Gastrocnemius medialis (tissue), 4 donors: ENCODE measurements at regions of chr20 and their contacts with region 1.

Region 1: DNA sequence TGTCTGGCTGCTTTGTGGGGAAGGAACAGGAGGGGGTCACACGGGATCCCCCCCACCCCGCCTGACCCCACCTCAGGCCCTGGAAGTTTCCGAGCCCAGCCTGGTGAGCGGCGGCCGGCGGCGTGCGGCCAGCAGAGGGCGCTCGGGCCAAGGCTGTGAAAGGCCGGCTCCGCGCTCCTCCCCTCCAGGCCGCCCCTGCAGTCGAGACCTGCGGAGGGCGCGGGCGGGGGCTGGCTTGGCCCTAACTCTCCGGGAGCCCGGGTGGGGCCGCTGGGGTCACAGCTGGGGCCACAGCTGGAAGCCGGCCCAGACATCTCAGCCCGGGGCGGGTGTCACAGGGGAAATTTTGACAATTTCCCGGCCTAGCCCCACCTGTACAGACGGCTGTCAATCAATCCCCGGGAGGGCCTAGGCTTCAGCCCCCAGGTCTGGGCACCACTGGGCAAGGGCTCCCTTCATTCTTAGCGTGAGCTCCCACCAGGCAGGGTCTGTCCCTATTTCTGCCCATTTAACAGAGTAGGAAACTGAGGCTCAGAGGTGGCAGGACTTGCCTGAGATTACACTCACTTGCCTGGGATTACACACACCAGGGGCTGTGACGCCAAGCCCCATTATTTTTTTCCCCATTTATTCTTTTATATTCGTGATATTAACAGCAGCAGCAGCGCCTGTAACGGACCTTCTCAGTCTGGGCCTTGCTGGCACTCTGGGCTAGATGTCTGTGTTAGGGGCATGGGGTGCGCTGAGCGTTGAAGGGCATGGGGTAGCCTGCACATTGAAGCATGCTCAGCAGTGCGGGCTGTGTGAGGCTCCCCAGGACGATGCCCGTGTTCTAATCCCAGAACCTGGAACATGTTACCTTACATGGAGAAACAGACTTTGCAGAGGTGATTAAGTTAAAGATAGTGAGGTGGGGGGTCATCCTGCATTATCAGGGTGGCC is 23.0 kb downstream of the ZBP1 start:
- DNase-seq: peak; percentile 32 to 35
- ATAC-seq: peak; percentile 49 to 68
- H3K4me3 ChIP-seq: peak overlapping the region in 1 of 4 donors; percentile 25
- H3K27ac ChIP-seq: no peak overlapping the region
- H3K4me1 ChIP-seq: peaks cover 0 to 6% of the 10 kb centered on the region in 2 donors
- H3K27me3 ChIP-seq: no peaks in the 10 kb centered on the region
- CTCF ChIP-seq: peak; percentile 75 to 94 (median 89)
- POLR2A ChIP-seq: no peak

Region 2: DNA sequence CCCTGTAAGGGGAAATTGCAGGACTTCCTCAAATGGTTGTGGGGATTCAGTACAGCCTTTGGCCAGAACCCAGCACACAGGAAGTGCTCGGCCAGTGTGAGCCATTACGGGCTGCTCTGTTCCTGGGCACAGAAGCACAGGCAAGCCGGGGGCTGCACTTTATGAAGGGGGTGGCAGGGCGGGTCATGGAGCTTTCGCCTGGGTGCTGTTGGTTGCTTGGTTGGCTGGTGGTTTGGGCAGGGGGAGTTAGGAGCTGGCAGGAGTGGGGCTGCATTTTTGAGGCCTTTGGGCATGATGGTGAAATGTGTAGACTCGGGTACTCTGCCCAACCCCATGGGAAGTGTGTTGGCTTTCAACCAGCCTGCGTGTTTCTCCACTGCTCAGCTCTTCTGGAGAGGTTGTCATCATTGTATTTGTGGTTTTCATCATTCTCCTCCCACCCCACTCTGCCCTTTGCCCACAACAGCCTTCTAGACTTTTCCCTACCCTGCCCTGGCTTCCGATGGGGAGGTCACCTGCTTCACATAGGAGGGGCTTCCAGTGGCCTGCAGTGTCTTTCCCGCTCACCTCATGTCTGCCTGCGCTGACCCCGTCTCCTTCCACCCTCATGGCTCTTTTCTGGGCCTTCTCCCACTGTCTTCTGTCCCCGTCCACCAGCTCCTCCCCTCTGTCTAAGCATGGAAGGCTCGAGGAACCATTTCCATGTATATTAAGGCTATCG is 222.2 kb before region 1 on chr20:
- in situ Hi-C with region 1: loop called in 1 of 4 experiments (anchors 10 kb)
- intact Hi-C with region 1: loop called (anchors 10 kb)
- DNase-seq: no peak
- ATAC-seq: peak; percentile 23 to 27
- H3K4me3 ChIP-seq: no peak overlapping the region
- H3K27ac ChIP-seq: peak overlapping the region in 1 of 4 donors; percentile 25
- H3K4me1 ChIP-seq: no peaks in the 10 kb centered on the region
- H3K27me3 ChIP-seq: no peaks in the 10 kb centered on the region
- CTCF ChIP-seq: no peak
- POLR2A ChIP-seq: no peak

Region 3: GRCh38 chr20:57480444-57481160 is 116.7 kb before region 1 on chr20:
- in situ Hi-C with region 1: no loop called
- intact Hi-C with region 1: no loop called
- DNase-seq: no peak
- ATAC-seq: no peak
- H3K4me3 ChIP-seq: no peak overlapping the region
- H3K27ac ChIP-seq: no peak overlapping the region
- H3K4me1 ChIP-seq: peaks cover 10 to 13% of the 10 kb centered on the region in 2 donors
- H3K27me3 ChIP-seq: peaks cover 0 to 2% (median 0%) of the 10 kb centered on the region in 3 donors
- CTCF ChIP-seq: no peak
- POLR2A ChIP-seq: no peak

Region 4: DNA sequence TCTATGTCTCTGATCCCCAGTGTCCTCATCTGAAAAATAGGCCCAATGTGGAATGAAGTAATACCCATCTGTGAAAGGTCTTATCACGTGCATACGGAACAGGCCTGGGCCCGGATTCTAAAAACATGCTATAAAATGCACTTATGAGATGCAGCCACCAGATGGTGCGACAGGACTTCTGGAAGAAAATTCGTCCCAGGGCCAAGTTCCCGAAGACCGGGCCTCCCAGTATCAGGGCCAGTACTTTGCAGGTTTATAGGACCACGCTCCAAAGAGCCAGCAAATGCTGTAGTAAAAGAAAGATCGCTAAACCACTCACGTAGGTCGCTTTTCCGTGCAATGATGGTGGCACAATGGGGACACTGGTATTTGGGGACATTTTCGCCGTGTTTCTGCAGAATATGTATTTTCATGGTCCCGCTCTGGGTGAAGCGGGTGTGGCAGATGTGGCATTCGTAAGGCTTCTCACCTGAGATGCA is 83.0 kb before region 1 on chr20:
- in situ Hi-C with region 1: loop called (anchors 5 kb)
- intact Hi-C with region 1: loop called (anchors 1 kb)
- DNase-seq: peak; percentile 49 to 53
- ATAC-seq: peak; percentile 62 to 81
- H3K4me3 ChIP-seq: no peak overlapping the region
- H3K27ac ChIP-seq: no peak overlapping the region
- H3K4me1 ChIP-seq: peaks cover 0 to 5% of the 10 kb centered on the region in 2 donors
- H3K27me3 ChIP-seq: no peaks in the 10 kb centered on the region
- CTCF ChIP-seq: peak; percentile 63 to 82 (median 75)
- POLR2A ChIP-seq: no peak

Region 5: GRCh38 chr20:57709931-57710799 is 112.9 kb after region 1 on chr20 and contains the start of gene PMEPA1:
- in situ Hi-C with region 1: no loop called
- intact Hi-C with region 1: no loop called
- DNase-seq: peak; percentile 92 to 94
- ATAC-seq: peak; percentile 74 to 78
- H3K4me3 ChIP-seq: peak within 1 kb of the TSS; percentile 62 to 84 (median 73)
- H3K27ac ChIP-seq: peak within 1 kb of the TSS; percentile 83 to 94 (median 91)
- H3K4me1 ChIP-seq: peaks cover 53% of the 10 kb centered on the region in 2 donors
- H3K27me3 ChIP-seq: no peaks in the 10 kb centered on the region
- CTCF ChIP-seq: peak in 2 of 5 experiments; percentile 7 to 36
- POLR2A ChIP-seq: peak; percentile 85 to 94
- total RNA-seq, gene PMEPA1: 1.5 to 8.1 (median 5.8) TPM

Region 6: GRCh38 chr20:58209652-58210397 is 612.6 kb after region 1 on chr20:
- in situ Hi-C with region 1: loop called (anchors 5 to 10 kb)
- intact Hi-C with region 1: loop called (anchors 1 kb)
- DNase-seq: peak; percentile 46 to 58
- ATAC-seq: peak; percentile 47 to 80
- H3K4me3 ChIP-seq: no peak overlapping the region
- H3K27ac ChIP-seq: no peak overlapping the region
- H3K4me1 ChIP-seq: no peaks in the 10 kb centered on the region
- H3K27me3 ChIP-seq: peaks cover 0 to 7% (median 3%) of the 10 kb centered on the region in 3 donors
- CTCF ChIP-seq: peak; percentile 99 to 100 (median 100)
- POLR2A ChIP-seq: no peak

Region 7: GRCh38 chr20:58219301-58219700 is 622.0 kb after region 1 on chr20:
- in situ Hi-C with region 1: loop called in 3 of 4 experiments (anchors 5 to 10 kb)
- intact Hi-C with region 1: no loop called
- DNase-seq: no peak
- ATAC-seq: no peak
- H3K4me3 ChIP-seq: no peak overlapping the region
- H3K27ac ChIP-seq: no peak overlapping the region
- H3K4me1 ChIP-seq: no peaks in the 10 kb centered on the region
- H3K27me3 ChIP-seq: peaks cover 4 to 22% (median 19%) of the 10 kb centered on the region in 3 donors
- CTCF ChIP-seq: no peak
- POLR2A ChIP-seq: no peak